ENCODE measurements at regions of chr5 and their contacts with region 1.

Region 1: GRCh38 chr5:135466178-135467050 is 14.3 kb upstream of the TIFAB start:
- DNase-seq: peak; percentile 76 to 90 (median 89)
- ATAC-seq: peak; percentile 93
- H3K4me3 ChIP-seq: peak overlapping the region; percentile 22
- H3K27ac ChIP-seq: no peak overlapping the region
- H3K4me1 ChIP-seq: no peaks in the 10 kb centered on the region
- H3K27me3 ChIP-seq: no peaks in the 10 kb centered on the region

Region 2: GRCh38 chr5:135296904-135297816 is 169.3 kb before region 1 on chr5:
- intact Hi-C with region 1: no loop called
- DNase-seq: no peak
- ATAC-seq: no peak
- H3K4me3 ChIP-seq: no peak overlapping the region
- H3K27ac ChIP-seq: no peak overlapping the region
- H3K4me1 ChIP-seq: no peaks in the 10 kb centered on the region
- H3K27me3 ChIP-seq: no peaks in the 10 kb centered on the region

Region 3: DNA sequence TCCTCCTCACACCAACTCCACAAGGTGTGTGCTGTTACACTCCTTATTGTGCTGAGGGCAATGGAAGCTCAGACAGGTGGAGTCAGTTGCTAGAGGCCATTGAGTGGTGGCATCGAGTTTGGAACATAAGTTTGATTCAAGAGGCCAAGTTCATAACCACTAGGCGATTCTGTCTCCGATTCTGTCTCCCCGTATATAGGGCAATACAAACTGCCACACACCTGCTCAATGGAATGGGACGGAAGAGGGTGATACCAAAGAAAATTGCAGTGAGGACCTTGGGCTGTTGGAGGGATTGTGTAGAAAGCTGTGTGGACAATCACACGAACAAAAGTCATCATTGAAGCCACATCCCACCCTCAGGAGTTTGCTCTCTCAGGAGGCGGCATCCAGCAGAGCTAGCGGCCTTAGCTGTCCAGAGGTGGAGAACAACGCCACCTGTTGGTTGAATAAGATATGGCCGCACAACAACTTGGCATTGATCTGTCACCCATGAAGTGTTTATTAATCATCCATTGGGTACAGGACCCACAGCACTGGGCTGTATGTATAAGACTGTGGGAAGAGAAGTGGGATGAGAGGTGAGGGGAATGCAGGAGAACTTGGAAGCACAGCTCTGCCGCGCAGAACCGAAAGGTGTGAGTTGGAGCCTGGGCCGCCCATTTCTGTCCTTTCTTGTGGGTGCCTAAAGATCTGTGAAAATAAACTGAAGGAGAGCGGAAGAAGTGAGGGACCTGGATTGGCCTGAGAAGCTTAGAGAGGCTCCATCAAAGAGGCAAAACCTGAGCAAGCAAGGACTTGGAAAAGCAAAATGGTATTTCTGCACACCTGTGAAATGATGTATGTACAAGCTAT is 85.4 kb after region 1 on chr5:
- intact Hi-C with region 1: loop called (anchors 2 to 5 kb)
- DNase-seq: peak; percentile 58 to 83 (median 75)
- ATAC-seq: peak; percentile 76 to 81
- H3K4me3 ChIP-seq: no peak overlapping the region
- H3K27ac ChIP-seq: no peak overlapping the region
- H3K4me1 ChIP-seq: no peaks in the 10 kb centered on the region
- H3K27me3 ChIP-seq: no peaks in the 10 kb centered on the region

Region 4: DNA sequence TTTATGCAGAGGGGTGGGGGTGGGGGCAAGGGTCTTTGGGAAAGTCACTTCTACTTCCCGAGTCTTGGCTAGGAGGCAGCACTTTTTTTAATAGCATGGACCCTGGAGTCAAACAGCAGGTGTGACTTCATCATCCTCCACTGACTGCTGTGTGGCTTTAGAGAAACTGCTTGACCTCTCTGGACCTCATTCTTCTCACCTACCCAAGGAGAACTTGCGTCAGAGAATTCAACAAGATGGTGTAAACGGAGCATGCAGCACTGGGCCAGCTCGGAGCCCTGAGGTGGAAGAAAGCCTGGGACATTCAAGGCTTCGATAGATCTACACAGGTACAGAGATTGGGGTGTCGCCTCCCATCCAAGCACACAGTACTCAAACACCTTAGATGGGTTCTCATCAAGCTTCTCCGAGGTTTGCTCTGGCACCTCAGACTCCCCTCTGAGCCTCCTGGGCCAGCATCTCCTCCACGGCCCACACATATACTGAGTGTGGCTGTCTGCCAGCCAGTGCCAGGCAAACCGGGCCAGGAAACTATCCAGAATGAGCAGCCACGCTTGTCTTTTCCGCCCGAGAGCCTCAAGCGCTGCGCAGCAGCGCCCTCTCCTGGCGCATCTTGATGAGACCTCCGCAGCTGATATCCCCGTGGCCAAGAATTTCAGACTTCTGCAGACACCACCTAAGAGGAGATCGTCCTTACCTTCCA is 363.4 kb after region 1 on chr5:
- intact Hi-C with region 1: loop called in 2 of 4 experiments (anchors 10 kb)
- DNase-seq: peak; percentile 65 to 84 (median 84)
- ATAC-seq: peak; percentile 28 to 38
- H3K4me3 ChIP-seq: no peak overlapping the region
- H3K27ac ChIP-seq: no peak overlapping the region
- H3K4me1 ChIP-seq: no peaks in the 10 kb centered on the region
- H3K27me3 ChIP-seq: no peaks in the 10 kb centered on the region

Measured in right cardiac atrium (tissue), 5 donors.